CD4-positive, alpha-beta T cell (primary cell): ENCODE measurements at regions of chr18 and their contacts with region 1.

Region 1: DNA sequence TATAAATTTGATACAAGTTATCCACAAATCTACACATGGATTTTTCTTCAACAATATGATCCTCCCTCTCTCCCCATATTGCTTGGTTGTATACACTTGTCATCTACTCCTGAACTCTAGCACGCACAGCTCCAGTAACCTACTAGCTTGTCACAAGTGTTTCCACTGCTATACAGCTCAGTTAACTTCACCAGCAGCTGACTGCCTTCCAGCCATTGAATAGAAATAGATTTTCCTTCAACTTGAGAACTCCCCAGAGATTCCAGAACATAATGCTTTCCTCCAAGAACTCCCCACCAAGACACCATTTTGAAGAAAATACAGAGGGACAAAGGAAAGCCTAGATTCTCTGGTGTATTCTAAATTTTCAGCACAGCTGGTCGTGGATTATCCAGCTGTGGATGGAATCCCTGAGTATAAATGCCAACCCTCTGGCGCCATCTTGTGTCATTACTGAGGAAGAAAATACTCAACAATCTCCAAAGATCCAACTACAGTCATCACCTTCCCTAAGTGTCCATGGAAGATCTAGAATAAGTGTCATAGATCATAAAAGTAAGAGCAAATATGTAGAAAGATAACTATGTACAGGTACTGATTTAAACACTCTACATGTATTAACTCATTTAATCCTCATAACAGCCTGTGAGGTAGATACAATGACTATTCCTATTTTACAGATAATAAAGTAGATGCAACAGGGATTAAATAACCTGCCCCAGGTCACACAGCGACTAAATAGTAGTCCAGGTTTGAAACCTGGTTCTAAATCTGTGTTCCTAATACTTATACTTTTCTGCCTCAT is 156.7 kb downstream of the ARHGAP28 start:
- DNase-seq: peak in 1 of 14 experiments; percentile 5
- ATAC-seq: no peak
- H3K4me3 ChIP-seq: no peak overlapping the region
- H3K4me3 Mint-ChIP-seq: no peak overlapping the region
- H3K27ac ChIP-seq: no peak overlapping the region
- H3K27ac Mint-ChIP-seq: no peak overlapping the region
- H3K4me1 ChIP-seq: no peaks in the 10 kb centered on the region
- H3K4me1 Mint-ChIP-seq: no peaks in the 10 kb centered on the region
- H3K27me3 ChIP-seq: no peaks in the 10 kb centered on the region
- H3K27me3 Mint-ChIP-seq: no peaks in the 10 kb centered on the region
- CTCF ChIP-seq: no peak

Region 2: DNA sequence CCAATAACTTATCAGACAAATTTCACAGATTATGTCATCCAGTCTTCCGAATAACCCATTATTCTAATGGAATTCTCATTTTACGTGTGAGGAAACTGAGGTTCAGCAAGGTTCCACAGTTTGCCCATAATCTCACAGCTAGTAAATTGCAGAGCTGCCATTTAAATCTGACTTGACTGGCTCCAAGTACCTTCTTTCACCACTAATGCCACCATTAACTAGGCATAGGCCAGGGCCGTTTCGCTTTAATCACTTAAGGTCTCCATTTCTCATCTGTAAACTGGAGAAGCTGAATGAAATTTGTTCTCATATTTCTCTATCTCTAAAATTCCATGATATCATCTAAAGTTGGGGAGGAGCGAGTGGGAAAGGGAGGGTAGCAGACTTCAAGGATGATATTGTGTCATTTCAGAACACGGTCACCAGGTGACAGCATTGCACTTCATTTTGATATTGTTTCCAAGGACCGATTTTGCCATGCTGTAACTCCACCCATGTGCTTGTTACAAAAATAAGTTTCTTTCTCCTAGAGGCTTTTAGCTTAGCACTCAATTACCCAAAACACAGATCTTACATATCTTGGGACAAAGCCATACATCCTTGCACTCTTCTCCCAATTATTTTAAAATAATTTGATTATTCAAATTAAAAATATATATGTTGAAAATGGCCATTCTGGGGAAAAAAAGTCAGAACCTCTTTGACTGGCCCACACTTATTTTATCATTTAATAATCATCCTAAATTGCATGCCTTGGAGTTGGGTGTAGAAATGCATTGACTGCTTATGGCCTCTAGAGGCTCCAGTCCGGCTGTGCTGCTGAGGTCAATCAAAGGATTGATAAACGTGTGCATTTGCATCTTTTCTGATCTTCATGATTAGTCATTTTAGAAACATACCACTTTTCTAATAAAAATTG is 1812.9 kb before region 1 on chr18:
- CTCF ChIA-PET with region 1: no interaction called
- POLR2A ChIA-PET with region 1: no interaction called
- intact Hi-C with region 1: loop called (anchors 5 to 10 kb)
- DNase-seq: peak in 8 of 14 experiments; percentile 3 to 66 (median 20)
- ATAC-seq: peak; percentile 85
- H3K4me3 ChIP-seq: no peak overlapping the region
- H3K4me3 Mint-ChIP-seq: no peak overlapping the region
- H3K27ac ChIP-seq: no peak overlapping the region
- H3K27ac Mint-ChIP-seq: no peak overlapping the region
- H3K4me1 ChIP-seq: no peaks in the 10 kb centered on the region
- H3K4me1 Mint-ChIP-seq: no peaks in the 10 kb centered on the region
- H3K27me3 ChIP-seq: no peaks in the 10 kb centered on the region
- H3K27me3 Mint-ChIP-seq: peaks cover 4% of the 10 kb centered on the region
- CTCF ChIP-seq: peak; percentile 80

Region 3: GRCh38 chr18:5879479-5879882 is 1006.7 kb before region 1 on chr18:
- CTCF ChIA-PET with region 1: no interaction called
- POLR2A ChIA-PET with region 1: no interaction called
- intact Hi-C with region 1: loop called in 1 of 2 experiments (anchors 10 kb)
- DNase-seq: no peak
- ATAC-seq: no peak
- H3K4me3 ChIP-seq: no peak overlapping the region
- H3K4me3 Mint-ChIP-seq: no peak overlapping the region
- H3K27ac ChIP-seq: no peak overlapping the region
- H3K27ac Mint-ChIP-seq: no peak overlapping the region
- H3K4me1 ChIP-seq: no peaks in the 10 kb centered on the region
- H3K4me1 Mint-ChIP-seq: no peaks in the 10 kb centered on the region
- H3K27me3 ChIP-seq: no peaks in the 10 kb centered on the region
- H3K27me3 Mint-ChIP-seq: peaks cover 26% of the 10 kb centered on the region
- CTCF ChIP-seq: peak; percentile 65

Region 4: DNA sequence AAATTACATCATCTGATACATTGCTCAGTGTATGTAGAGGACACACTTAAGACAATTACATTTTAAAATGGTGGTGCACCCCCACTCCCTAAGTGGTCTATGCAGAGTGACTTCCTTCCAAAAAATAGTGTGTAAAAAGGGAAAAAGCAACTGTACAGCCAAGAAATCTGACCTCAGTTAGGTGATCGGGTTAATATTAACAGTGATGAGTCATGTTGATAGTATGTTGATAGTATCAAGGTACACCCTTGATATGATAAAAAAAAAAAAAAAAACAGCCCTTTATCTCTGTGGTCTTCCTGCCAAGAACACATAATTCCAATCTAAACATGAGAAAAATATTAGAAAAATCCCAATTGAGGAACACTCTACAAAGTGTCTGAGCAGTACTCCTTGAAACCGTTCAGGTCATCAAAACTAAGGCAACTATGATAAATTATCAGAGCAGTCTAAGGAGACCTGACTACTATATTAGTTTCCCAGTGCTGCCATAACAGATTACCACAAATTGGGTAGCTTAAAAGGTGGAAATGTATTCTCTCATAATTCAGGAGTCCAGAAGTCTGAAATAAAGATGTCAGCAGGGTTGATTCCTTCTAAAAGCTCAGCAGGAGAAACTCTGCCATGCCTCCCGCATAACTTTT is 15.2 kb after region 1 on chr18:
- CTCF ChIA-PET with region 1: no interaction called
- POLR2A ChIA-PET with region 1: no interaction called
- intact Hi-C with region 1: no loop called
- DNase-seq: no peak
- ATAC-seq: no peak
- H3K4me3 ChIP-seq: no peak overlapping the region
- H3K4me3 Mint-ChIP-seq: no peak overlapping the region
- H3K27ac ChIP-seq: no peak overlapping the region
- H3K27ac Mint-ChIP-seq: no peak overlapping the region
- H3K4me1 ChIP-seq: no peaks in the 10 kb centered on the region
- H3K4me1 Mint-ChIP-seq: no peaks in the 10 kb centered on the region
- H3K27me3 ChIP-seq: no peaks in the 10 kb centered on the region
- H3K27me3 Mint-ChIP-seq: no peaks in the 10 kb centered on the region
- CTCF ChIP-seq: no peak

Region 5: DNA sequence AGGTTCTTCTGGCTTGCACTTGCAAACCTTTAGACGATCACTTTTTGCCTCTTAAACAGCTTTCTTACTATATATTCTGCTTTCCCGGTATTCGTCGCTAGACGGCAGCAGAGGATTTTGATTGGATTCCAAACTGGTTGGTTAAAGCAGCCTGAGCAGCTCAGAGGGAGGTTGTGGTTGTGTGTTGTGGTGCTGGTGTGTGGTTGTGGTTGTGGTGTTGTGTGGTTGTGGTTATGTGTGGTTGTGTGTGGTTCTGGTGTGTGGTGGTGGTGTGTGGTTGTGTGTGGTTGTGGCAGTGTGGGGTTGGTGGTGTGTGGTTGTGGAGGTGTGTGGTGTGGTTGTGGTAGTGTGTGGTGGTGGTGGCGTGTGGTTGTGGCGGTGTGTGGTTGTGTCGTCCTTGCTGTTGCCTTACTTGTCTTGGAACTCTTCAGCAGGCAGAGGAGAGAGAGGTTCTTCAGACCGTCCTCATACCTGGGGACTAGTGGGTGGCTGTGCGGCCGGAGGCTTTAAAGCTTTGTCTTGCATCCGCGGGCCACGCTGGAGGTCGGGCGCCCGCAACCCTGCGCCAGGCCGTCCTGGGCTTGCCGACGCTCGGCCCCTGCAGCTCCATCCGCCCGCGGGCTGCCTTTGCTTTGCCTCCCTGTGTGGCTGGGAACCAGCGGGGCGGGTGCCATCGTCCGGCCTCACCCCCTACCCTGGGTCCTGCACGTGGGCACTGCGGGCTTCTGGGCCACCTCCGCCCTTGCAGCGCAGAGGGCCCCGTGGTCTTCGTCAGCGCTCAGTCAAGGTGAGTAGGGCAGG is 34.1 kb after region 1 on chr18:
- CTCF ChIA-PET with region 1: no interaction called
- POLR2A ChIA-PET with region 1: no interaction called
- intact Hi-C with region 1: loop called in 1 of 2 experiments (anchors 2 kb)
- DNase-seq: no peak
- ATAC-seq: no peak
- H3K4me3 ChIP-seq: no peak overlapping the region
- H3K4me3 Mint-ChIP-seq: no peak overlapping the region
- H3K27ac ChIP-seq: no peak overlapping the region
- H3K27ac Mint-ChIP-seq: no peak overlapping the region
- H3K4me1 ChIP-seq: no peaks in the 10 kb centered on the region
- H3K4me1 Mint-ChIP-seq: no peaks in the 10 kb centered on the region
- H3K27me3 ChIP-seq: no peaks in the 10 kb centered on the region
- H3K27me3 Mint-ChIP-seq: peaks cover 4% of the 10 kb centered on the region
- CTCF ChIP-seq: no peak